Activated CD4-positive, alpha-beta T cell treated with anti-CD3 and anti-CD28 coated beads for 36 hours (primary cell): ENCODE measurements at regions of chr18 and their contacts with region 1.

Region 1: GRCh38 chr18:49250816-49251388 is 209.5 kb downstream of the DYM start:
- DNase-seq: peak; percentile 35
- ATAC-seq: no peak
- H3K4me3 Mint-ChIP-seq: no peak overlapping the region
- H3K27ac Mint-ChIP-seq: no peak overlapping the region
- H3K4me1 Mint-ChIP-seq: no peaks in the 10 kb centered on the region
- H3K27me3 Mint-ChIP-seq: no peaks in the 10 kb centered on the region

Region 2: GRCh38 chr18:49412679-49413078 is 161.8 kb after region 1 on chr18:
- CTCF ChIA-PET with region 1: interaction called, 7 read pairs
- POLR2A ChIA-PET with region 1: no interaction called
- intact Hi-C with region 1: loop called in 1 of 2 experiments (anchors 1 kb)
- DNase-seq: no peak
- ATAC-seq: no peak
- H3K4me3 Mint-ChIP-seq: no peak overlapping the region
- H3K27ac Mint-ChIP-seq: peak overlapping the region; percentile 65
- H3K4me1 Mint-ChIP-seq: peaks cover 39% of the 10 kb centered on the region
- H3K27me3 Mint-ChIP-seq: no peaks in the 10 kb centered on the region

Region 3: GRCh38 chr18:49447810-49448745 is 197.2 kb after region 1 on chr18:
- CTCF ChIA-PET with region 1: interaction called, 4 read pairs
- POLR2A ChIA-PET with region 1: no interaction called
- intact Hi-C with region 1: loop called (anchors 1 to 10 kb)
- DNase-seq: peak; percentile 55
- ATAC-seq: peak; percentile 58
- H3K4me3 Mint-ChIP-seq: no peak overlapping the region
- H3K27ac Mint-ChIP-seq: no peak overlapping the region
- H3K4me1 Mint-ChIP-seq: peaks cover 8% of the 10 kb centered on the region
- H3K27me3 Mint-ChIP-seq: no peaks in the 10 kb centered on the region